Transverse colon (tissue), 4 donors: ENCODE measurements at regions of chr12 and their contacts with region 1.

Region 1: GRCh38 chr12:114924946-114925475 is 241.0 kb upstream of the TBX3 start:
- DNase-seq: no peak
- H3K4me3 ChIP-seq: no peak overlapping the region
- H3K27ac ChIP-seq: no peak overlapping the region
- H3K4me1 ChIP-seq: peaks cover 0 to 3% (median 0%) of the 10 kb centered on the region in 4 donors
- H3K27me3 ChIP-seq: no peaks in the 10 kb centered on the region
- CTCF ChIP-seq: no peak
- EP300 ChIP-seq: no peak
- POLR2A ChIP-seq: no peak

Region 2: DNA sequence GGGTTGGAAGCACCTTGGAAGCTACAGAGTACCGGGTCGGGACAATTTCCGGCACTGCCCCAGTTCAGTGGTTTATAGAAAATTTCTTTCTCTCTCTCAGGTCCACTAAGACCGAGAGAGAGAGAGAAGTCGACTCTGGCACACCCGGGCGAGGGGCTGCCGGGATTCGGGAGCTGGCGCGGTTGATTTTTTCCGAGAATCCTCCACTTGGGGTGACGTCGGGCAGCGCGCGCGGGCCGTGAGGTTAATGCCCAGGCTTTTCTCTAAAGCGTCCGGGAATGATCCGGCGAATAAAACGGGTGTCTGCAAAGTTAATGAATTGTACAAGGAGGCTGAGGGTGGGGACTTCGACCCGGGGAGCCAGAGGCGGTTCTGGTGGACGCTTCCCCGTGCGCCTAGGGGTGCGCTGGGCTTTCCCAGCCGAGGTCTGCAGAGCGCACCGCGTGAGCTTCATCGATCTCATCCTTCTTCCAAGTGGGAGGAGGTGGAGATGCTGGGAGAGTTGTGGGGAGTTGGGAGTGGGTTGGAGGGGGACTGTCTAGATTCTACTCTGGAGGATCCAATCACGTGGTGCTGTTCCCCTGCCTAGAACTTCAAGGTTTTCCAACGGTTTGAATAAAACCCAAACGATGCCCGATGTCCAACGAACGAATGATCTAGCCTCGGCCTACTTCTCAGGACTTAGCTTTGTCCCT is 189.2 kb before region 1 on chr12:
- in situ Hi-C with region 1: no loop called
- intact Hi-C with region 1: no loop called
- DNase-seq: no peak
- H3K4me3 ChIP-seq: no peak overlapping the region
- H3K27ac ChIP-seq: peak overlapping the region in 1 of 4 donors; percentile 46
- H3K4me1 ChIP-seq: peaks cover 3 to 29% (median 15%) of the 10 kb centered on the region in 4 donors
- H3K27me3 ChIP-seq: peaks cover 21% of the 10 kb centered on the region
- CTCF ChIP-seq: no peak
- EP300 ChIP-seq: no peak
- POLR2A ChIP-seq: no peak

Region 3: GRCh38 chr12:114954511-114955055 is 29.6 kb after region 1 on chr12:
- in situ Hi-C with region 1: no loop called
- intact Hi-C with region 1: loop called (anchors 1 kb)
- DNase-seq: no peak
- H3K4me3 ChIP-seq: no peak overlapping the region
- H3K27ac ChIP-seq: no peak overlapping the region
- H3K4me1 ChIP-seq: no peaks in the 10 kb centered on the region
- H3K27me3 ChIP-seq: no peaks in the 10 kb centered on the region
- CTCF ChIP-seq: no peak
- EP300 ChIP-seq: no peak
- POLR2A ChIP-seq: no peak